CD4-positive, alpha-beta T cell (primary cell): ENCODE measurements at regions of chrX and their contacts with region 1.

Region 1: GRCh38 chrX:74015379-74016019 is 288.5 kb upstream of the ZCCHC13 start:
- DNase-seq: peak; percentile 33 to 80 (median 51)
- ATAC-seq: peak; percentile 55
- H3K4me3 ChIP-seq: no peak overlapping the region
- H3K4me3 Mint-ChIP-seq: no peak overlapping the region
- H3K27ac ChIP-seq: no peak overlapping the region
- H3K27ac Mint-ChIP-seq: no peak overlapping the region
- H3K4me1 ChIP-seq: no peaks in the 10 kb centered on the region
- H3K4me1 Mint-ChIP-seq: peaks cover 5% of the 10 kb centered on the region
- H3K27me3 ChIP-seq: no peaks in the 10 kb centered on the region
- H3K27me3 Mint-ChIP-seq: no peaks in the 10 kb centered on the region
- CTCF ChIP-seq: peak; percentile 78

Region 2: DNA sequence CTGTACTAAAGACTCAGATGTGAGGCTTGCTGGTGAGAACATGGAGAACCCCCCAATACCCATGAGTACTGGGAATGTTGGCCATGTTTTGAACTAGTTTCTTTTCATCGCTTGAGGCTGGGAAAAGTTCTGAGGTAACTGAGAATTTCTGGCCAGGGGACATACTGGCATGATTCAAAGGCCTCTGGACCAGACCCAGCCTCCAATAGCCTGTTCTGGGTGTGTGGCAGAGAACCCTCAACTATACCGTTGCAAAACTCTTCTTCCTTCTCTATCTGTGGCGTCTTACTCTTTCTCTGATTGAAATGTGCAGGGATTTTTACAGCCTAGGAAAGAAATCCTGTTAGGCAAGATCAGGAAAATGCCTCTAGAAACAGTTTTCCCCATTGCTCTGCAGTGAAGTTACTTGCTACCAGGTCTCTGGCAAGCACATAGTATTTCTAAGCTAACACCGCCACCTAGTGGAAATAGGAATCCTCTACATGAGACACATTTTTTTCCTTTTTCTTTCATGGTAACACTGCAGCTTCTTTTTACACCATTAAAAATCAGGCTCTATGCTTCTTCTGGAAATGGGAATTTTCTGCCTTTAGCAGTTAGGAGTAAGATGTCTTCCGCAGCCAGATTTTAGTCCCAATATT is 117.8 kb after region 1 on chrX:
- CTCF ChIA-PET with region 1: no interaction called
- POLR2A ChIA-PET with region 1: no interaction called
- intact Hi-C with region 1: loop called in 1 of 2 experiments (anchors 5 kb)
- DNase-seq: peak in 4 of 14 experiments; percentile 24 to 65 (median 56)
- ATAC-seq: no peak
- H3K4me3 ChIP-seq: no peak overlapping the region
- H3K4me3 Mint-ChIP-seq: no peak overlapping the region
- H3K27ac ChIP-seq: no peak overlapping the region
- H3K27ac Mint-ChIP-seq: no peak overlapping the region
- H3K4me1 ChIP-seq: no peaks in the 10 kb centered on the region
- H3K4me1 Mint-ChIP-seq: no peaks in the 10 kb centered on the region
- H3K27me3 ChIP-seq: no peaks in the 10 kb centered on the region
- H3K27me3 Mint-ChIP-seq: no peaks in the 10 kb centered on the region
- CTCF ChIP-seq: peak; percentile 68

Region 3: DNA sequence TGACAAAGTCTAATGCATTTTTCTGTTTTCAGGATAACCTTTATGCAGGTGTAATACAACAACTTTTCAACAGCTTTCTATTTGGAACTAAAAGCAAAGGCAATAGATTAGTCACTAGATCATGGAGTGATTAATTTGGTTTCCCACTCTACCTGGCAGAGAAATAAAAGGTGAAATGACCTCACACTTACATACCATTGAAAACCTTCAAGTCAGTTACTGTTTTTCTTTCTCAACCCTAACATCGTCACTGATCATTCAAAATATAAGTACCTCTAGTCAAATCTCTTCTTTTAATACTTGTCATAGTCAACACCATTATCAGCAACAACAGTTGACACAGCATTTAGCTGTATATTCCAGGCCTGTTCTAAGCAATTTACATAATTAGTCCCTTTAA is 203.4 kb after region 1 on chrX:
- CTCF ChIA-PET with region 1: no interaction called
- POLR2A ChIA-PET with region 1: no interaction called
- intact Hi-C with region 1: no loop called
- DNase-seq: no peak
- ATAC-seq: no peak
- H3K4me3 ChIP-seq: no peak overlapping the region
- H3K4me3 Mint-ChIP-seq: no peak overlapping the region
- H3K27ac ChIP-seq: no peak overlapping the region
- H3K27ac Mint-ChIP-seq: no peak overlapping the region
- H3K4me1 ChIP-seq: no peaks in the 10 kb centered on the region
- H3K4me1 Mint-ChIP-seq: peaks cover 7% of the 10 kb centered on the region
- H3K27me3 ChIP-seq: no peaks in the 10 kb centered on the region
- H3K27me3 Mint-ChIP-seq: no peaks in the 10 kb centered on the region
- CTCF ChIP-seq: no peak